ENCODE measurements at regions of chr10 and their contacts with region 1.

Region 1: GRCh38 chr10:104521901-104522694 is 119.0 kb upstream of the SORCS3 start:
- DNase-seq: peak; percentile 30 to 55
- ATAC-seq: peak in 4 of 8 donors; percentile 43 to 86 (median 72)
- H3K4me3 ChIP-seq: no peak overlapping the region
- H3K27ac ChIP-seq: no peak overlapping the region
- H3K4me1 ChIP-seq: peaks cover 0 to 3% (median 0%) of the 10 kb centered on the region in 9 donors
- H3K27me3 ChIP-seq: peaks cover 0 to 7% (median 0%) of the 10 kb centered on the region in 7 donors
- CTCF ChIP-seq: no peak

Region 2: GRCh38 chr10:104281694-104282093 is 240.4 kb before region 1 on chr10:
- intact Hi-C with region 1: loop called in 1 of 10 experiments (anchors 5 kb)
- DNase-seq: no peak
- ATAC-seq: no peak
- H3K4me3 ChIP-seq: no peak overlapping the region
- H3K27ac ChIP-seq: no peak overlapping the region
- H3K4me1 ChIP-seq: no peaks in the 10 kb centered on the region
- H3K27me3 ChIP-seq: peaks cover 0 to 6% (median 0%) of the 10 kb centered on the region in 7 donors
- CTCF ChIP-seq: no peak